ENCODE measurements at regions of chr15 and their contacts with region 1.

Region 1: DNA sequence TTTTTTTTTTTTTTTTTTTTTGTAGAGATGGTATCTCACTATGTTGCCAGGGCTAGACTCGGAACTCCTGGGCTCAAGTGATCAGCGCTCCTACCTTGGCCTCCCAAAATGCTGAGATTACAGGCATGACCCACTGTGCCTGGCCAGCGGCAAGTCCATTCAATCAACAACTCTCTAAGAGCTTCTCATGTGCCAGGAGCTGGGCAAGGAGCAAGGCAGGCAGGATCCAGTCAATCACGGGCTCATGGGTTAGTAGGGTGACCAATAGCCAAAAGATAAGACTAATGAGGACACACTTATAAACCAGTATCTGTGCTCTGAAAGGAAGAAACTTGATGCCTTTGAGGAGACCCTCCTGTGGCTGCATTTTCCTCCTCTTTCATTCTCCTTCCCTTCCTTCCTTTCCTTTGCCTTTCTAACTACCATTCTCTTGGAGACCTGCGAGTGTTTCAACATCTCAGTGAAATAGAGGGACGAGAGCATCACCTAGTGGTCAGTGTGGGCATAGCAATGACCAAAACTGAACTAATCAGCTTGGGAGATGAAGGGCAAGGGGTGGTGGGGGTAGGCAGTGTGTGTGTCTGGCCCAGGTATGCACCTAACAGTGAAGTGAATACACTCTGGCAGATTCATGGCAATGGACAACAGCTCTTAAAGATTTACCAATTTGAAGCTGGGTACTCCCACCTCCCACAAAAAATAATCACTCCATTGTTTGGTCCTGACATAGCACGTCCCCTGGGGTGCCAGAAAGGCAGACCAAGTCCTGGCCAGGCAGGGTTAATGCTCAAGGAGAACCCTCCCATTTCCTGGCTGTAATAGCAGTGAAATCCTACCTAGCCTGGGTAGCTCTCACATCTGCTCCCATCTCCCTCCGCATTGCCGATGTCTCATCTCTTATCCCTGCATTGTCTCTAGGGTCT is 6.2 kb downstream of the RPP25 start:
- DNase-seq: peak; percentile 73
- CTCF ChIP-seq: peak; percentile 98

Region 2: DNA sequence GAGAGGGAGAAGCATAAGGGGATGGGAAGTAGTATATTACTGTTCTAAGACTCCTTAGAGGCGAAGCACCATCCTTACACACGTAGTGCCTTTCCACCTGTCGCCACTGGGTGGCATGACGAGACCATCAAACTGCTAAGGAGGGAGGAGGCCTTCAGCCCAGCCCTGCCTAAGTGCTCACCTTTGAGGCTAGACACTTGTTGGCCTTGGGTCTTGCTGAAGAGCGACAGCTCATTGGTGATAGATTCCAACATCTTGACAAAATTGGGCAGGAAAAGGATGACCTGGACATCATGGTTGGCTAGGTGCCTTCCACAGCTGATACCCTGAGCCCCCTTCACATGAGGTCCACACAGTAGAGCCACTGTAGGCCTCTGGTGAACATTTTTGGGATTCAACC is 315.1 kb before region 1 on chr15:
- CTCF ChIA-PET with region 1: interaction called, 41 read pairs
- POLR2A ChIA-PET with region 1: no interaction called
- DNase-seq: peak; percentile 77
- CTCF ChIP-seq: peak; percentile 86

Region 3: GRCh38 chr15:74763416-74763815 is 186.9 kb before region 1 on chr15:
- CTCF ChIA-PET with region 1: interaction called, 200 read pairs
- POLR2A ChIA-PET with region 1: no interaction called
- DNase-seq: no peak
- CTCF ChIP-seq: no peak

Region 4: GRCh38 chr15:74787251-74788041 is 162.9 kb before region 1 on chr15:
- CTCF ChIA-PET with region 1: interaction called, 20 read pairs
- POLR2A ChIA-PET with region 1: no interaction called
- DNase-seq: peak; percentile 82
- CTCF ChIP-seq: peak; percentile 78

Region 5: DNA sequence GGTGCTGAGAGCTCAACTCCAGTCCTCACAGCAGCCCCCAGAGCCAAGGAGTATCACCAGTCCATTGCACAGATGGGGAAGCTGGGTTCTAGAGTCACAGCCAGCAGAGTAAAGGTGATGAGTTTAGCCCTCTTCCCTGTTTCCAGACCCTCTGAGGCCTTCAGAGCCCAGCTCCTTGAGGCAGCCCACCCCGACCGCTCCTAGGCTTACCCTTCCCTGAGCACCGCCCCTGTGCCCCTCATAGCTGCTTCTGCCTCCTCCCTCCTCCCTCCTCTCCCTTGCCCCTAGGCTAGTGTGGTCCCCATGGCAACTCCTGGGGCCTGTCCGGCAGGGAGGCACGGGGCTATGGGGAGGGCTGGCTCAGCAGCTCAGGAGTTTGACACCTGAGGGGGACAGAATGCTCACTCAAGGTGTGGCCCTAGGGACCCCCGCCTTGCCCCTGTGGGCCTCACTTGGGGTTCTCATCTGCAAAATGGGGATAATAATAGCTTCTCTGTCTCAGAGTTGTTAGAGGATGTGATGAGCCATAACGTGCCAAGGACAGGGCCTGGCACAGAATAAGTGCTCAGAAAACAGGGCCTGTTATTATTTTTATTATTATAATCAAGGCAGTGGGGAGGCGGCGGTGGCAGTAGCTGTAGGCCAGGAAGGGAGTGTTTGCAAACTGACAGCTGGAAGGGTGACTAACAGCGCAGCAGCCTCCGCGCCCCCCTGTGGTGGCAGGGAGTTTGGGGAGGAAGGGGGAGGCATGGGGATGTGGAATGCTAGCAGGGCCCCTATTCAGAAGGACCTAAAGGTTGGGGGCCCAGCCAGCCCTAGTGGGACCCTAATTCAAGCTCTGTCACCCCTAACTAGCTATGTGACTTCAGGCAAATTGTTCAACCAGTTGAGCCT is 157.0 kb before region 1 on chr15:
- CTCF ChIA-PET with region 1: interaction called, 20 read pairs
- POLR2A ChIA-PET with region 1: no interaction called
- DNase-seq: no peak
- CTCF ChIP-seq: peak; percentile 63

Region 6: GRCh38 chr15:74873036-74873755 is 77.1 kb before region 1 on chr15 and contains the start of gene SCAMP2:
- CTCF ChIA-PET with region 1: interaction called, 12 read pairs
- POLR2A ChIA-PET with region 1: no interaction called
- DNase-seq: peak; percentile 96
- CTCF ChIP-seq: no peak

Region 7: GRCh38 chr15:74937596-74938296 is 12.6 kb before region 1 on chr15 and contains the start of gene COX5A:
- CTCF ChIA-PET with region 1: interaction called, 26 read pairs
- POLR2A ChIA-PET with region 1: no interaction called
- DNase-seq: peak; percentile 95
- CTCF ChIP-seq: no peak

Measured in GM10248 (cell line).